HepG2 (cell line): ENCODE measurements at regions of chr19 and their contacts with region 1.

Region 1: DNA sequence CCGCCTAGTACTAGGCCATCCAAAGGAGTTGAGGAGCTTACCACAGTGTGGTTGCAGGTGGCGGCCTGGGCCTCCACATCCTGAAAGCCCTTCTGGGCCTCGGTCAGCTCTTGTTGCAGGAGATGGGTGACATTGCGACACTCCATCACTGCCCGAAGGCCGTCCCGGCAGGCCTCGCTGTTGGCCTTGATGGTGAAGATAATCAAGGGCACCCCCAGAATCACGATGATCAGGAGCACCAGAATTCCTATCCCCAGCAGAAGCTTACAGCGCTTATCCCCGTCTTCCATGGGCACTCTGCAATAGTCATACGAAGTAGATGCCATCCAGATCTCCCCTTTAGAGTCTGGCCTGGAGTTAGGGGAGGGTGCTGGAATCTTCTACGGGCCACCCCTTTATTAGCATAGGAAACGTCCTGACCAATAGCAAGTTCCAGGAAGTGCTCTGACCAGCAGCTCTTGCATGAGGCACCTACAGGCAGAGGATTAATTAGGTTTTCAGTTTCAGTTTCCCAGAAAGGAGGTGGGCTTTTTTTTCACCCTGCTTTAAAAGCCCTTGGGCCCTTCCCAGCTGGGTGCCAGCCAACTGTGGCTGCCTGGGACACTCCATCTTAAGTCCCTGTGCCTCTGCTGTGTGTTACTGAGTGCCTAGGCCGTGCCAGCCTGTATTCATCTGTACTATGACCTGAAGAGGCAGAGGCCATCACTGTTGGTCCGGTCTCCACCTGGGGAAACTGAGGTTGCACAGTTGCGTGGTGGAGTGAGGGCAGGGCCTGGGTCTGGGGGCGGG is at the start of gene BST2:
- DNase-seq: peak; percentile 93
- ATAC-seq: peak; percentile 94
- H3K4me3 ChIP-seq: peak within 1 kb of the TSS; percentile 62 to 82 (median 70)
- H3K27ac ChIP-seq: peak within 1 kb of the TSS; percentile 81
- H3K4me1 ChIP-seq: peaks cover 13% of the 10 kb centered on the region
- H3K27me3 ChIP-seq: no peaks in the 10 kb centered on the region; a peak in 1 of 5 replicates
- CTCF ChIP-seq: no peak
- EP300 ChIP-seq: no peak
- POLR2A ChIP-seq: peak in 1 of 2 experiments; percentile 78; a peak in 3 of 4 replicates
- RAD21 ChIP-seq: no peak
- total RNA-seq, gene BST2: 39.1 and 58.8 TPM in 2 replicates

Region 2: DNA sequence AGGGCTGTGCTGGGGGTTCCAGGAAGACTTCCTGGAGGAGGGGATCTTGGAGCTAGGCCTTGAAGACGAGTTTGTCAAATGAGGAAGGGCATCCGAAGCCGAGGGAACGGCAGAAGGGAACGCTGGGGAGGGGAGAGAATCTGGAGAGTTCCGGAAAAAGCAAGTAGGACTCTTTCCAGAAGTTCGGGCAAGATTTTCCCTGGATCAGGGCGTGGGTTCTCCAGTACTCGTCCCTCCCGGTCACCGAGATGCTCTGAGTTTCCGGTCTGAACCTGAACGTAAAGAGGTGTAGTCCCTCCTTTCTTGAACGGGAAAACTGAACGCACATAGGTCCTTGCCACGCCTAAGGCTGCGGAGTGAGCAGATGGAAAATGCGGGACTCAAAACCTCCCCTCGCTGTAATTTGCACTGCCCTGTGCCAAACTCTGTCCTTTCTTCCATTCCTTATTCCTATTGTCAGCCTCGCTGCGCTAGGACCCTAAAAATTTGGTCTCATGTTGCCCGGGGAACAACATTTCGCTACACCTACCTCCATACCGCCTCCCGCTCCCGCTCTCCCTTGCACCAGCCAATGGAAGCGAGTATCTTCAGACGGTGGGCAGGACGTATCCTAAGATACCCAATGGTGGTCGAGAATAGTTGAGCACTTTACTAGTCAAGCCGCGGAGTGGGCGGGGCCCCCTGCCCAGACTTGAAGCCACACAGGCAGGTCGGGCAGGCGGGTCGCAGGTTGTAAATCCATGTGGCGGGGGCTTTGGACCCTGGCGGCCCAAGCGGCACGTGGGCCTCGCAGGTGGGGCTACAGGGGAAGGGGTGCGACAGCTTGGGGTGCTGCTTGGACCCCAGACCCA is 68.3 kb before region 1 on chr19 and contains the start of gene GTPBP3:
- CTCF ChIA-PET with region 1: no interaction called
- POLR2A ChIA-PET with region 1: interaction called, 5 read pairs
- in situ Hi-C with region 1: no loop called
- intact Hi-C with region 1: loop called (anchors 5 kb)
- DNase-seq: peak; percentile 99
- ATAC-seq: peak; percentile 79
- H3K4me3 ChIP-seq: peak within 1 kb of the TSS; percentile 88 to 92 (median 90)
- H3K27ac ChIP-seq: peak within 1 kb of the TSS; percentile 88
- H3K4me1 ChIP-seq: peaks cover 65% of the 10 kb centered on the region
- H3K27me3 ChIP-seq: no peaks in the 10 kb centered on the region; a peak in 1 of 5 replicates
- CTCF ChIP-seq: no peak
- EP300 ChIP-seq: 0 out of 4 replicates have a peak, but pooled peaks of 1 of the 2 experiments have one; percentile 12
- POLR2A ChIP-seq: peak; percentile 54 to 89
- RAD21 ChIP-seq: no peak
- total RNA-seq, gene GTPBP3: 21.9 and 30.0 TPM in 2 replicates

Region 3: GRCh38 chr19:17419621-17420466 is 14.4 kb after region 1 on chr19 and contains the start of gene MVB12A:
- CTCF ChIA-PET with region 1: no interaction called
- POLR2A ChIA-PET with region 1: interaction called, 76 read pairs
- in situ Hi-C with region 1: no loop called
- intact Hi-C with region 1: loop called (anchors 1 kb)
- DNase-seq: peak; percentile 98
- ATAC-seq: peak; percentile 91
- H3K4me3 ChIP-seq: peak within 1 kb of the TSS; percentile 65 to 96 (median 82)
- H3K27ac ChIP-seq: peak within 1 kb of the TSS; percentile 65
- H3K4me1 ChIP-seq: peaks cover 17% of the 10 kb centered on the region
- H3K27me3 ChIP-seq: no peaks in the 10 kb centered on the region
- CTCF ChIP-seq: peak; percentile 6; the same call in 1 of the 2 replicates
- EP300 ChIP-seq: peak; percentile 30 to 38; a peak in 2 of 4 replicates
- POLR2A ChIP-seq: peak; percentile 48 to 60
- RAD21 ChIP-seq: no peak
- total RNA-seq, gene MVB12A: 31.8 and 36.1 TPM in 2 replicates

Region 4: GRCh38 chr19:17648097-17648660 is 242.7 kb after region 1 on chr19:
- CTCF ChIA-PET with region 1: no interaction called
- POLR2A ChIA-PET with region 1: no interaction called
- in situ Hi-C with region 1: no loop called
- intact Hi-C with region 1: no loop called
- DNase-seq: no peak
- ATAC-seq: no peak; the same call in 2 of the 3 replicates
- H3K4me3 ChIP-seq: no peak overlapping the region
- H3K27ac ChIP-seq: no peak overlapping the region
- H3K4me1 ChIP-seq: no peaks in the 10 kb centered on the region
- H3K27me3 ChIP-seq: no peaks in the 10 kb centered on the region; a peak in 2 of 5 replicates
- CTCF ChIP-seq: no peak
- EP300 ChIP-seq: no peak
- POLR2A ChIP-seq: no peak
- RAD21 ChIP-seq: no peak